Dendritic cell treated with granulocyte-macrophage colony-stimulating factor and Interleukin-4, amounts not matched to agents 40 ng/mL and 50 ng/mL, for 4 days (primary cell): ENCODE measurements at regions of chr19 and their contacts with region 1.

Region 1: DNA sequence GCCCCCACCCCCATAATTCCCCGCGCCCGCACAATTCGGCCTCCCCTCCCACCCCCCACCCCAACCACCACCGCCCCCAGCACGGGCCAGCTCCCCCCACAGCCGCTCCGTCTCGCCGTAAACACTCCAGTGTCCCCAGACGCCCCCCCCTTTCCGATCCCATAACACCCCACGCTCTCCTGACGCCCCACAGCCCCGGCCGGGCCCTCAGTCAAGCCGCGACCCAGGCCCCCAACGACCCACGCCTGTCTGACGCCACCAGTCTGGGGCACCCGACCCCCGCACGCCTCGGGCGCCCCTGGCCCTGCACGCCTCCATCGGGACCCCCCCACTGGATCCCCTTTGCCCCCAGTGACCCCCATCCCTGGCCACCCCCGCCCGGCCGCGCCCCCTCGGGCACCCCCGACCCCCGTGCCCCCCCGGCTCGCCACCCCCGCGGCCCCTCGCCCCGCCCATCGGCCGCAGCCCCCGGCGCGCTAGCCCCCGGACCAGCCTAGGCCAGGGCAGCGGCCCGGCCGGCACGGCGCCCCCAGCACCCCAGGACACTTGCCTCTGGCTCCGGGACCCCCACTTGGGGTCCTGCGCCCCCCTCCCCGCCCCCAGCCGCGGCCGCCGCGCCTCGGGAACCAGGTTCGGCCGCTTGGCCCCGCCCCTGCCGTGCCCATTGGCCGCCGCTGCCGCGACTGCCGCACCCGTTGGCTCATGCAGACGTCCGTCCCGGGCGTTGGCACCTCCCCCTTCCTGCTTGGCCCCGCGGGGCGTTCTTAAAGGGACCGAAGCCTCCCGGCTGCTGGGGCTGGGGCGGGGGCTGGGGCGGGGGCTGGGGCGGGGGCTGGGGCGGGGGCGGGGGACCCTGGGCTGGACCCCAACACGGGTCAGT is at the start of gene FKBP8:
- H3K4me3 Mint-ChIP-seq: peak within 1 kb of the TSS; percentile 83
- H3K27ac Mint-ChIP-seq: peak within 1 kb of the TSS; percentile 92
- H3K4me1 Mint-ChIP-seq: peaks cover 41% of the 10 kb centered on the region
- H3K27me3 Mint-ChIP-seq: no peaks in the 10 kb centered on the region

Region 2: DNA sequence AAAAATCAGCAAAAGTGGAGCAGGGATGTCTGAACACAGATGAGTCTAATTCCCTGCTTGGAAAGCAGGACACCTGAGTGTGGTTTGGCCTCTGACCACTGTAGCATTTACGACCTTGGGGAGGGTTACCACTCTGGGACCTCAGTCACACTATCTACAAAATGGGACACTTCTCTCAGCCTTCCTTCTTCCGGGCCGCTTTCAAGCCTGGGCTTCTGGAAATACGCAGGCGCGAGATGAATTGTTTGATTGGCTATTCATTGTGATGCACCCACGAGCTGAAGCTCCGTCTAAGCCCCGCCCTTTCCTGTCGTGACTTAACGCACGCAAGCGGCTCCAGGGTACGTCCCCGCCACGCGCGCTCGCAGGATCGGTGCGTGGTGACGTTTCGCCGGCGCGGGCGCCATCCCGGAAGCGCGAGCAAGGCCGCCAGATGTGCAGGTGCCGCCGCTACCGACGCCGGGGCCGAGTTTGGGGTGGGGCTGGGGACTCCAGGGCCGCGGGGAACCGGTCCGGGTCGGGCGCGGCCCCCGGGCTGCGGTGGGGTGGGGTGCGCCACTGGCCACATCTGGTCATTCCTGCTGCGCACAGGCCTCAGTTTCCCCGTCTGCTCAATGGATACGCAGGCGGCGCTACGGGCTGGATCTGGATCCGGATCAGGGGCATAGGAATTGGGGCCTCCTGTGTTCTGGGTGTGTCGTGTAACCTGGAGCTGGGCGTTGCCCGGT is 14.5 kb after region 1 on chr19 and contains the start of gene KXD1:
- intact Hi-C with region 1: loop called (anchors 1 kb)
- H3K4me3 Mint-ChIP-seq: peak within 1 kb of the TSS; percentile 83
- H3K27ac Mint-ChIP-seq: peak within 1 kb of the TSS; percentile 89
- H3K4me1 Mint-ChIP-seq: peaks cover 24% of the 10 kb centered on the region
- H3K27me3 Mint-ChIP-seq: no peaks in the 10 kb centered on the region

Region 3: GRCh38 chr19:18571564-18572300 is 28.6 kb after region 1 on chr19 and contains the start of gene UBA52:
- intact Hi-C with region 1: loop called (anchors 1 kb)
- H3K4me3 Mint-ChIP-seq: peak within 1 kb of the TSS; percentile 78
- H3K27ac Mint-ChIP-seq: peak within 1 kb of the TSS; percentile 95
- H3K4me1 Mint-ChIP-seq: peaks cover 25% of the 10 kb centered on the region
- H3K27me3 Mint-ChIP-seq: no peaks in the 10 kb centered on the region